Cardiac septum (tissue), 1 donor: ENCODE measurements at regions of chr3 and their contacts with region 1.

Region 1: DNA sequence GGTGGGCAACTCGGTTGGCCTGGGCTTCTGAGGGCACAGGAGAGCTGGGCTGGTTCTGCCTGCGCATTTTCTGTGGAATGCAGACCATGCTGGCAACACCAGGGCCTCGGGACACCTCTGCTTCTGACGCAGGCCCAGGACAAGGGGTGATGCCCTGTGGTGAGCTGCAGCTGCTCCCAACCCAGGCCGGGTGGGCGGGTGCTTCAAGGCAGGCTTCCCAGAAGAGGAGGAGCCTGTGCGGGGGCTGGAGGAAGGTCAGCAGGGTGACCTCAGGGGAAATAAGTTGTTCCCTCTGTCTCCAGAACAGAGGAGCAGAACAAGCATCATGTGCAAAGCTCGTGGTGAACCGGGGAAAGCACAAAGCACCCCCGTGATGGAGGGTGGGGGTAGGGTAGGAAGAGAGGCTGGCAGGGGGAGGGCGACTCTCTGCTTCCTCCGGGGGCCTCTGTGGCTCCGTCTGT is 11.0 kb upstream of the PLXNA1 start:
- DNase-seq: peak; percentile 85

Region 2: GRCh38 chr3:126811530-126811929 is 160.4 kb before region 1 on chr3:
- intact Hi-C with region 1: no loop called
- DNase-seq: no peak

Region 3: DNA sequence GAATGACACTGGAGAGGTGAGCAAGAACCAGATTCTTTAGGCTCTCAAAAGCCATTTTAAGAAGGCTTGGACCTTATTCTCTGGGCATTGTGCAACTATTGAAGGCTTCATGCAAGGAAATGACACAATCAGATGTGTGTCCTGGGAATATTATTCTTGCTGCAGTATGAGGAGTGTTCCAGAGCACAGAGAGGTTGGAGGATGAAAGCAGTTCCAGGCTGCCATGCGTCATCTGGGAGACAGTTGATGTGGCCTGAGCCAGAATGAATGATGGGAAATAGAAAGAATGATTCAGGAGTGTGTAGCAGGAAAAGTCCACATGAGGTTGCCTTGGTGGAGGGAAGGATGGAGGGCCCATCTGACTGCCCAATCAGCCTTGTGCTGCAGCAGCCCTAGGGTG is 144.8 kb before region 1 on chr3:
- intact Hi-C with region 1: loop called (anchors 5 kb)
- DNase-seq: no peak

Region 4: GRCh38 chr3:127124120-127124519 is 152.2 kb after region 1 on chr3:
- intact Hi-C with region 1: no loop called
- DNase-seq: no peak